Activated CD4-positive, alpha-beta T cell treated with anti-CD3 and anti-CD28 coated beads for 36 hours (primary cell): ENCODE measurements at regions of chr14 and their contacts with region 1.

Region 1: GRCh38 chr14:68780358-68781160 is 12.3 kb downstream of the ZFP36L1 start:
- DNase-seq: peak; percentile 53
- ATAC-seq: peak; percentile 14
- H3K4me3 Mint-ChIP-seq: peak overlapping the region; percentile 61
- H3K27ac Mint-ChIP-seq: peak overlapping the region; percentile 92
- H3K4me1 Mint-ChIP-seq: peaks cover 80% of the 10 kb centered on the region
- H3K27me3 Mint-ChIP-seq: no peaks in the 10 kb centered on the region

Region 2: GRCh38 chr14:68487805-68488590 is 292.6 kb before region 1 on chr14:
- CTCF ChIA-PET with region 1: no interaction called
- POLR2A ChIA-PET with region 1: no interaction called
- intact Hi-C with region 1: loop called (anchors 5 kb)
- DNase-seq: no peak
- ATAC-seq: peak; percentile 59
- H3K4me3 Mint-ChIP-seq: no peak overlapping the region
- H3K27ac Mint-ChIP-seq: peak overlapping the region; percentile 12
- H3K4me1 Mint-ChIP-seq: peaks cover 41% of the 10 kb centered on the region
- H3K27me3 Mint-ChIP-seq: no peaks in the 10 kb centered on the region

Region 3: DNA sequence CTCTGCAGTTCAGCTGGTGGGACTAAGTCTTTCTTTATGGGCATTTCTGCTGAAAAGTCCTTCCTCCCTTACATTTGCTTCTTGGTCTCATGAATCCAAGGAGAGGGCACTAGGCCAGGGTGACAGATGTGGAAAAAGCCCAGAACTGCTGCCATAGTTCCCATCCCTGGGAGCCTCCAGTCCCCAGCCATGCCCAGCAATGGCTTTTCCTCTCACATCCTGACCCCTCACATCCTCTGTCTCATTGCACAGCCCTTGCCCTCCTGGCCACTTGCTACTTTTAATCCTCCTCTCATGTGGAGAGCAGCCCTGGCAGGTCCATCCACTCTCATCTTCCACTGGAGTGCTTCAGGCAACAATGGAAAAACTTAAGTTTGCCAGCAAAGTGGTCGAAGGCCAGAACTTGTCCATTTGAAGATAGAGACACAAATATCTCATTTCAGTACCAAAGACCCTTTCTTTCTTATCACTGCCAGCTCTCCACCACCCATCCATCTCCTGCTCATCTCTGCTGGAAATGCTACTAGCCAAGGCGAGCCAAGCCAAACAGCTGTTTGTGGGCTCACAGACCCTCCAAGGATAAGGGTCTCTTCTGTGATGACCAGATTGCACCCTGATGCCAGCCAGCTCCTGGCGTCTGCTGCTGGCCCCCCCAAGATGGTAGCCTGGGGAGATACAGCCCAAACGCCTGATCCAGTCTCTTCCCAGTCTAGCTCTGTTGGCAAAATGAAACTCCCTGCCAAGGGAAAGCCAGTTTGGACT is 110.0 kb before region 1 on chr14:
- CTCF ChIA-PET with region 1: no interaction called
- POLR2A ChIA-PET with region 1: no interaction called
- intact Hi-C with region 1: no loop called
- DNase-seq: no peak
- ATAC-seq: no peak
- H3K4me3 Mint-ChIP-seq: no peak overlapping the region
- H3K27ac Mint-ChIP-seq: peak overlapping the region; percentile 7
- H3K4me1 Mint-ChIP-seq: peaks cover 12% of the 10 kb centered on the region
- H3K27me3 Mint-ChIP-seq: no peaks in the 10 kb centered on the region

Region 4: DNA sequence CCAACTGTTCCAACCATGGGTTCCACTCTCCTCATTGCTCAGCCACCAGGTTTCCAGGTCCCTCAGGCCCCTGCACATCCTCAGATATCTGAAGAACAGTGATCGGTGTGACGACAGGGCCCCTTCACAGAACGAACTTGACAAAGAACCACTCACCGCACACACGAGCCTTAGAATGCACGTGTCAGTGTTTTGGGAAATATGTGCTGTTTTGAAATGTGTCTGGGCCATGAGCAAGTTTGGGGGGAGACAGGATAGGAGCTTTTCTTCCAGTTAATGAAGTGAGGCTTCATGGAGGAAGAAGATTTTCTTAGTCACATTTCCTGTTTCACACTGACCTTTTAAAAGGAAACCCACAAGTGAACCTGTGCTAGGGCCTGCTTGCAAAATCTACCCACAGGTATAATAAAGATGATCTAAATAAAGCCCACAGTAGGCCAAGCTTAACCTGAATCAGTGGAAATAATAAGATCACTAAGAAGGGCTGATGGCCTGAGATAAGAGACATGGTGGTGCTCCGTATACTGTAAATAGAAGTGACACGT is 46.3 kb before region 1 on chr14:
- CTCF ChIA-PET with region 1: interaction called, 4 read pairs
- POLR2A ChIA-PET with region 1: no interaction called
- intact Hi-C with region 1: loop called (anchors 2 to 5 kb)
- DNase-seq: peak; percentile 61
- ATAC-seq: peak; percentile 59
- H3K4me3 Mint-ChIP-seq: no peak overlapping the region
- H3K27ac Mint-ChIP-seq: peak overlapping the region; percentile 85
- H3K4me1 Mint-ChIP-seq: peaks cover 47% of the 10 kb centered on the region
- H3K27me3 Mint-ChIP-seq: no peaks in the 10 kb centered on the region

Region 5: GRCh38 chr14:68854421-68854820 is 73.9 kb after region 1 on chr14:
- CTCF ChIA-PET with region 1: no interaction called
- POLR2A ChIA-PET with region 1: no interaction called
- intact Hi-C with region 1: no loop called
- DNase-seq: no peak
- ATAC-seq: no peak
- H3K4me3 Mint-ChIP-seq: no peak overlapping the region
- H3K27ac Mint-ChIP-seq: no peak overlapping the region
- H3K4me1 Mint-ChIP-seq: no peaks in the 10 kb centered on the region
- H3K27me3 Mint-ChIP-seq: no peaks in the 10 kb centered on the region

Region 6: DNA sequence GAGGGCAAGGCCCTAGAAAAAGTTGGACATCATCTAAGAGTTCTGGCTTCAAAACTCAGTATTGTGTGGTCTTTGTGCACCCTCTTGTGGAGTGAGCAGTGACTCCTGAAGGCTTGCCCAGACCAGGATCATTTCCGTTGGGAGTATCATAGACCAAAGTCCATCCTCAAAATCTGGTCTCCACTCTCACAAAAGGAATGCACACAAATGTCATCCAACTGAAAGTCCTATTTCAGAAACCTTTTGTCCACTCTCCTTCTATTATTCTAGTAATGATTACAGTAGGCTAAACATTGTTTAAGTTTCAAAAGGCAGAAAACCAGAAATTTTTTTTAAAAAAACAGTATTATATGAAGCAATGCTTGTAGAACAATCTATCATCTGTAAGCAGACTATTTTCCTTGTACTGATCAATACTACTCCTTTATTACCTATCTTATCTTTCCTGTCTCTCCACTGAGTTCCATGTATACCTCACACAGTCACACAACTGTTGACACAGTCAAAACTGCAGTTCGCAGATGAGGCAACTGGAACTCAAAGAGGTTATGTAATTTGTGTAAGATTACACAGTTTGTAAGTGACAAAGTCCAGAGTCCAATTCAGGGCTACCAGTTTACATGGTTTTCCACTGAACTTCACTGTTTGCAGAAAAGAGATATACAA is 1537.5 kb after region 1 on chr14:
- CTCF ChIA-PET with region 1: no interaction called
- POLR2A ChIA-PET with region 1: no interaction called
- intact Hi-C with region 1: no loop called
- DNase-seq: peak; percentile 20
- ATAC-seq: peak; percentile 53
- H3K4me3 Mint-ChIP-seq: no peak overlapping the region
- H3K27ac Mint-ChIP-seq: no peak overlapping the region
- H3K4me1 Mint-ChIP-seq: no peaks in the 10 kb centered on the region
- H3K27me3 Mint-ChIP-seq: peaks cover 1% of the 10 kb centered on the region